ENCODE measurements at regions of chr6 and their contacts with region 1.

Region 1: DNA sequence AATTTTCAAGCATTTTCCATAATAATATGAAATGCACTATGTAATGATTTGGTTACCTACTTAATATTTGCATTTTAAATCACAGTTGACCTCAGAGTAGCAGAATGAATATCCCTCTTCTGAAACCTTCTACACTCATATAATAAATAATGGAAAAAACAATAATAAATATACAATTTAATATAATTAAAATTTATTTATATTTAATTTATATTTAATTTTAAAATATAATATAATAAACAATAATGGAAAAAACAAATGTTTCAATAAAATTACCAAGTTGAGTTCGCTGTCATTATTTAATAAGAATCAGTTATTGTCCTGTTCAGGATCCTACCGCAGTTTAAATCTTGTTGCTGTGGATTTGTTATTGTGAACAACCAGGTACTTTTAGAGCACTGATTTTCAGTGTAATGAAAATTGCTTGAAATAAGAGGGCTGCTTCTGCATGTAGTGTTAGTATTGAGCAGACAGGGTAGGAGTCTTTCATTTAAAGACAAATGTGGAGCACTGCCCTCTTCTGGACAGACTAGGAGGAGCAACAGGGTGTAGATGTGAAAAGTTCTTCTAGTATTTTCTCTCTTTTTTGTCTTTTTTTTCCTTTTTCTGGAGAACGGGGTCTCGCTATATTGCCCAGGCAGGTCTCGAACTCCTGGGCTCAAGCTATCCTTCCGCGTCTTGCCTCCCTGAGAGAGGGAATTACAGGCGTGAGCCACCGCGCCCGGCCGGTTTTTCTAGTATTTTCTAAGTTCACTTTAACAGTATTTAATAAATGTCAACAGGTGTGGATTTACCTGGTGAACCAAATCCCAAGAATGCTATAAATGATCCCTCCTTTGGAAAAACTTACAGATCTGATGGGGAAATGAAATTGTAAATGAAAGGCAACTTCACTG is 13.6 kb downstream of the TRAPPC3L start:
- DNase-seq: no peak
- H3K4me3 ChIP-seq: no peak overlapping the region
- H3K27ac ChIP-seq: no peak overlapping the region
- H3K4me1 ChIP-seq: no peaks in the 10 kb centered on the region
- H3K27me3 ChIP-seq: no peaks in the 10 kb centered on the region
- CTCF ChIP-seq: peak; percentile 35 to 73 (median 66)
- EP300 ChIP-seq: no peak
- POLR2A ChIP-seq: no peak

Region 2: GRCh38 chr6:116287689-116288282 is 244.1 kb before region 1 on chr6:
- intact Hi-C with region 1: loop called (anchors 5 kb)
- DNase-seq: no peak
- H3K4me3 ChIP-seq: no peak overlapping the region
- H3K27ac ChIP-seq: no peak overlapping the region
- H3K4me1 ChIP-seq: no peaks in the 10 kb centered on the region
- H3K27me3 ChIP-seq: no peaks in the 10 kb centered on the region
- CTCF ChIP-seq: peak in 3 of 4 experiments; percentile 62 to 89 (median 71)
- EP300 ChIP-seq: no peak
- POLR2A ChIP-seq: no peak

Region 3: GRCh38 chr6:116561377-116562018 is 29.6 kb after region 1 on chr6:
- intact Hi-C with region 1: loop called (anchors 1 kb)
- DNase-seq: peak; percentile 71
- H3K4me3 ChIP-seq: peak overlapping the region in 3 of 4 donors; percentile 21 to 41 (median 33)
- H3K27ac ChIP-seq: no peak overlapping the region
- H3K4me1 ChIP-seq: peaks cover 0 to 18% (median 9%) of the 10 kb centered on the region in 4 donors
- H3K27me3 ChIP-seq: no peaks in the 10 kb centered on the region
- CTCF ChIP-seq: peak; percentile 63 to 91 (median 80)
- EP300 ChIP-seq: no peak
- POLR2A ChIP-seq: no peak

Region 4: DNA sequence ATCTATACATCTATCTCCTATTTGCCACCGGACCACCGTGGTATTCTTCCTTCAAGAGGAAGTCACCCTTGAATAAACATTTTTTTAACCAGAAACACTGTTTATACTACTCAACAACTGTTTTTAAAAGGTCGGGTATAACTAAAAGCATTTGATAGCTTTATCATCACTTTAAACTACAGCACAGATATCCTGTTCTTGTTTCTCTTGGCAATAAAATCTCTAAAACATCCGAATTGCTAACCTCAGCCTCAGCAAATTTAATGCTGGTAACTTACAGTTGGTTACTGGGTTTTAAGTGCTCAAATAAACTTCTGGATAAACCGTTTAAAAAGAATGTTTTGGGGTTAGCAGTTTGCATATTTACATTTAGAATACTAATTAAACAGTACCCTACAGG is 116.2 kb after region 1 on chr6:
- intact Hi-C with region 1: loop called (anchors 10 kb)
- DNase-seq: no peak
- H3K4me3 ChIP-seq: no peak overlapping the region
- H3K27ac ChIP-seq: no peak overlapping the region
- H3K4me1 ChIP-seq: no peaks in the 10 kb centered on the region
- H3K27me3 ChIP-seq: no peaks in the 10 kb centered on the region
- CTCF ChIP-seq: no peak
- EP300 ChIP-seq: no peak
- POLR2A ChIP-seq: no peak

Measured in sigmoid colon (tissue), 7 donors.